H1 (cell line): ENCODE measurements at regions of chr13 and their contacts with region 1.

Region 1: DNA sequence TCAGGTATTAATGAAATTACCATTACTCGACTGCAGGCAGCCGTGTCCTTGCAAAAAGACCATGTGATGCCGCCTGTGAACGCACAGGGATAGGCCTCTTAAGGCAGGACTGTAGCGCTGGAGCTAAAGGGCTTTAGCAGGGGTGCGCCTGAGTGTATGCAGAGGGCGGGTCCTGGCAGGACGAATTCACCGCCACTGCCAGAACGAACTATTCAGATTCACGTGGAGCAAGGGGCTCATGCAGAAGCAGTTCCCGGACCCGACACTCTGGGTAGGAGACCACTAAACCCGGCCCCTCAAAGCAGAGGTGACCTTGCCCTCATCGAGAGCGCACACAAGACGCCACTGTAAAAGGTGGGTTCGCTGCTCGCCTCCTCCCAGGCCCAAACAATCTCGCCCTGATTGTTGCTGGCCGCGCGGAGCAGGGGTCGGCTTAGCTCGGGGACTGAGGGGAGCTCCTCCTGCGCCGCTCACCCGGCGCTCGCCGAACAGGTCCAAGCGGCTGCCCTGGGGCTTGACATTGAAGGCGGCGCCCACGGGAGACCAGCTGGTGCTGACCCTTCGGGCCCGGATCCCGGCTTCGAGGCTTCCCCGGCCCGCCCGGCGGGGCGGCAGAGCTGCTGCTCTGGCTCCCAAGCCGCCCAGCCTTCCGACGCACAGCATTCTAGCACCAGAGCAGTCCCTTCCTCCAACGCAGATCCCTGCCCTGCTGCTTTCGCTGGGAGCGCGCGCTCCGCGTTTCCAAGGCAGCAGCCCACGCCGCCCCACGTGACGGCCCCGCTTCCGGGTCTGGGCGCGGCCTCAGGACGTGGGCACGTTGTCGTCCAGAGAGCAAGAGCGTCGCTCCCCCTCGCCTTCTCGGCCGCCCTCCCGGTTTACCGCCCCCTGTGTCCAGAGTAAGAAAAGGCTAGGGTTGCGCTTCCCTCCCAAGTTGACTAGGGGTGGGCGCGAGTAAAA is at the start of gene MIPEP:
- DNase-seq: peak; percentile 84 to 92
- H3K4me3 ChIP-seq: peak within 1 kb of the TSS; percentile 82 to 92 (median 90)
- H3K27ac ChIP-seq: peak within 1 kb of the TSS; percentile 29
- H3K4me1 ChIP-seq: peaks cover 0 to 3% (median 1%) of the 10 kb centered on the region in 4 experiments; a peak in 4 of 7 replicates
- H3K27me3 ChIP-seq: no peaks in the 10 kb centered on the region
- CTCF ChIP-seq: peak; percentile 84 to 85 (median 84)
- EP300 ChIP-seq: peak in 1 of 2 experiments; percentile 50; a peak in 1 of 3 replicates
- POLR2A ChIP-seq: peak in 1 of 2 experiments; percentile 75; a peak in 2 of 3 replicates
- RAD21 ChIP-seq: peak; percentile 11 to 15; a peak in 2 of 4 replicates
- total RNA-seq, gene MIPEP: 23.8 and 24.2 TPM in 2 replicates

Region 2: DNA sequence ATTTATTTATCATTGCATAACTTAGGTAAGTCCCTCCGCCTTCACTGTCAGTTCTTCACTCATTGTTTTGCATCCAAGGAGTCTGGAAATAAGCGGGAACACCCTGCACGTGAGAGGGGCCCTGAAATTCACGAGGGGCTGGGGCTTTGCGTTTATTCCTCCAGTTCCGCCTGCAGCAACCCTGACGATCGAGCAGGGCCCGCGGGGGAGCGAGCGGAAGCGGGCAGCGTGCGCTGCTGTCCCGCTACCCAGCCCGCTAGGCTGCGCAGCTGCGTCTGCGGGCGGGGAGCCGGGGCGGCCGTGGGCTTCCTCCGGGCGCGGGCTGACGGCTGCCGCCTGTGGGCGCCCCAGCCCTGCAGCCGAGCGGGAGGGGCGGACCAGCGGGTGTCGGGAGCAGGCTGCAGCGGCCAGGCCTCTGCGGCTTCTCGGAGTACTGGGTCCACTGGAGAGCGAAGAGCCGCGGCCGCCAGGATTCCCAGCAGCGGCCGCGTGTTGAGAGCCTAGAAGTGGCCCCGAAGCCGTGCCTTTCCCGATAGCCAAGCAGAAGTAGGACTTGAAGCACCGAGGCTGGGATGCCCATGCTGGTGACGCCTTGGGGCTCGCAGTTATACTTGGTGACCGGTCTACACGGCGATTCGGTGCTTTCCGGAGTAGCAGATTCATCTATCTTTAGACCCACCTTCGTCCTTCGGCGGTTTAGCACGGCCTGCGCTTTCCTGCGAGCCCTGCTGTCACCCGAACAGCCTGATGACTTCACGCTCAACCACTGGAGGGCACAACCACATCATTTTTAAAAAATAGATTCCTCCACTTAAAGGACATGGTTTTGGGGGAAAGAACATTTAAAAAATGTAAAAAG is 422.6 kb before region 1 on chr13:
- CTCF ChIA-PET with region 1: interaction called, 19 read pairs
- POLR2A ChIA-PET with region 1: no interaction called
- DNase-seq: peak in 1 of 2 experiments; percentile 82
- H3K4me3 ChIP-seq: peak overlapping the region; percentile 23 to 55 (median 41)
- H3K27ac ChIP-seq: no peak overlapping the region
- H3K4me1 ChIP-seq: peaks cover 0 to 10% (median 7%) of the 10 kb centered on the region in 4 experiments; a peak in 5 of 7 replicates
- H3K27me3 ChIP-seq: peaks cover 0 to 10% (median 4%) of the 10 kb centered on the region in 4 experiments; a peak in 4 of 7 replicates
- CTCF ChIP-seq: peak; percentile 55 to 65 (median 58)
- EP300 ChIP-seq: no peak
- POLR2A ChIP-seq: no peak
- RAD21 ChIP-seq: peak; percentile 77 to 82

Region 3: GRCh38 chr13:23667750-23668149 is 221.2 kb before region 1 on chr13:
- CTCF ChIA-PET with region 1: interaction called, 13 read pairs
- POLR2A ChIA-PET with region 1: no interaction called
- DNase-seq: peak in 1 of 2 experiments; percentile 59
- H3K4me3 ChIP-seq: no peak overlapping the region
- H3K27ac ChIP-seq: no peak overlapping the region
- H3K4me1 ChIP-seq: no peaks in the 10 kb centered on the region
- H3K27me3 ChIP-seq: no peaks in the 10 kb centered on the region
- CTCF ChIP-seq: peak; percentile 50 to 65 (median 59)
- EP300 ChIP-seq: no peak
- POLR2A ChIP-seq: no peak
- RAD21 ChIP-seq: peak; percentile 57 to 69

Region 4: DNA sequence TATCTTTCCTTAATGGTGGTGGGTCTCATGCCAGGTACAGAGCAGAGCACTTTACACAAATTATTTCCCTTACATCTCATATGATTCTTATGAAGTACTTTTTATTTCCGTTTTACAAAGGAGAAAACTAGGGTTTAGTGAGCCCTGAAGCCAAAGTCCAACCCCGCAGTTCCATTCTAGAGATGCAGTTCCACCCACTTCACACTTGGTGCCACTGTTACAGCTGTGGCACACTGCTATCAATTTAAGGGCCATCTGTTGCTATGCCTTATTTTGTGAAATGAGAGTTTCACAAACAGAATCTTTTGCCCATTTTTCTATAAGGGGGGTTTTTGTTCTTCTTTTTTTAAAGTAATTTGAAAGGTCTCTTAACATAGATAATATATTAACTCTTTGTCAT is 12.7 kb before region 1 on chr13:
- CTCF ChIA-PET with region 1: interaction called, 10 read pairs
- POLR2A ChIA-PET with region 1: interaction called, 4 read pairs
- DNase-seq: no peak
- H3K4me3 ChIP-seq: no peak overlapping the region
- H3K27ac ChIP-seq: no peak overlapping the region
- H3K4me1 ChIP-seq: no peaks in the 10 kb centered on the region
- H3K27me3 ChIP-seq: no peaks in the 10 kb centered on the region
- CTCF ChIP-seq: peak; percentile 36 to 48 (median 43); a peak in 3 of 4 replicates
- EP300 ChIP-seq: no peak
- POLR2A ChIP-seq: no peak
- RAD21 ChIP-seq: peak; percentile 39 to 52

Region 5: DNA sequence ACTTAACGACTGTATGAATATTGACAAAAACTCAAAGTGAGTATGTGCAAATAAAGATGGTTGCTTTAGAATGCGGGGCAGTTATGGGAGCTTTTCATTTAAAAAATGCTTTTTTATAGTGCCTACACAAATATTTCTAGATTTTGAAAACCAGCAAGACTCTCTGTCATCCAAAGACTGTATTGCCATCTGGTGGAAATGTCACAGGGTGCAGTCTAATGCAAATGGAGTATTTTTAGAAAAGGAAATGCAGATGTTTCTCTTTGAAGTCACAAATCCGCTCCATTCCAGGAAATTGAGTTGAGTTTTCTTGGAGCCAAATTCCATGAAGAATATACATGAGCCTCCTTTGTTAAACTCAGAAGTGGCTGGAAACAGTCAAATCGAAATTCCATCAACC is 10.6 kb after region 1 on chr13:
- CTCF ChIA-PET with region 1: interaction called, 15 read pairs
- POLR2A ChIA-PET with region 1: no interaction called
- DNase-seq: no peak
- H3K4me3 ChIP-seq: no peak overlapping the region
- H3K27ac ChIP-seq: no peak overlapping the region
- H3K4me1 ChIP-seq: peaks cover 0 to 3% (median 0%) of the 10 kb centered on the region in 4 experiments; a peak in 3 of 7 replicates
- H3K27me3 ChIP-seq: peaks cover 0 to 10% (median 4%) of the 10 kb centered on the region in 4 experiments; a peak in 3 of 7 replicates
- CTCF ChIP-seq: no peak
- EP300 ChIP-seq: no peak
- POLR2A ChIP-seq: no peak
- RAD21 ChIP-seq: peak; percentile 11 to 36; a peak in 2 of 4 replicates

Region 6: GRCh38 chr13:24013189-24013588 is 124.3 kb after region 1 on chr13:
- CTCF ChIA-PET with region 1: no interaction called
- POLR2A ChIA-PET with region 1: no interaction called
- DNase-seq: no peak
- H3K4me3 ChIP-seq: no peak overlapping the region
- H3K27ac ChIP-seq: no peak overlapping the region
- H3K4me1 ChIP-seq: no peaks in the 10 kb centered on the region
- H3K27me3 ChIP-seq: no peaks in the 10 kb centered on the region
- CTCF ChIP-seq: no peak
- EP300 ChIP-seq: no peak
- POLR2A ChIP-seq: no peak
- RAD21 ChIP-seq: no peak